CD4-positive, alpha-beta memory T cell (primary cell): ENCODE measurements at regions of chr15 and their contacts with region 1.

Region 1: GRCh38 chr15:79896637-79897379 is at the start of gene MTHFS:
- DNase-seq: peak; percentile 81 to 87 (median 85)
- H3K4me3 ChIP-seq: peak within 1 kb of the TSS; percentile 74 to 84
- H3K4me3 Mint-ChIP-seq: peak within 1 kb of the TSS; percentile 96 to 100 (median 100)
- H3K27ac ChIP-seq: peak within 1 kb of the TSS; percentile 88
- H3K27ac Mint-ChIP-seq: peak within 1 kb of the TSS; percentile 97 to 100 (median 99)
- H3K4me1 ChIP-seq: peaks cover 32% of the 10 kb centered on the region
- H3K4me1 Mint-ChIP-seq: peaks cover 28 to 45% (median 36%) of the 10 kb centered on the region in 4 donors
- H3K27me3 ChIP-seq: no peaks in the 10 kb centered on the region
- H3K27me3 Mint-ChIP-seq: no peaks in the 10 kb centered on the region
- total RNA-seq, gene MTHFS: 21.3 to 25.6 TPM

Region 2: GRCh38 chr15:80072285-80072994 is 175.6 kb after region 1 on chr15:
- CTCF ChIA-PET with region 1: no interaction called
- POLR2A ChIA-PET with region 1: no interaction called
- intact Hi-C with region 1: loop called (anchors 5 kb)
- DNase-seq: peak; percentile 59 to 71 (median 65)
- H3K4me3 ChIP-seq: no peak overlapping the region
- H3K4me3 Mint-ChIP-seq: peak overlapping the region; percentile 51 to 87 (median 84)
- H3K27ac ChIP-seq: peak overlapping the region; percentile 21
- H3K27ac Mint-ChIP-seq: peak overlapping the region in 6 of 7 donors; percentile 3 to 79 (median 42)
- H3K4me1 ChIP-seq: peaks cover 45% of the 10 kb centered on the region
- H3K4me1 Mint-ChIP-seq: peaks cover 44 to 75% (median 61%) of the 10 kb centered on the region in 4 donors
- H3K27me3 ChIP-seq: no peaks in the 10 kb centered on the region
- H3K27me3 Mint-ChIP-seq: no peaks in the 10 kb centered on the region